GM18951 (cell line): ENCODE measurements at regions of chr5 and their contacts with region 1.

Region 1: DNA sequence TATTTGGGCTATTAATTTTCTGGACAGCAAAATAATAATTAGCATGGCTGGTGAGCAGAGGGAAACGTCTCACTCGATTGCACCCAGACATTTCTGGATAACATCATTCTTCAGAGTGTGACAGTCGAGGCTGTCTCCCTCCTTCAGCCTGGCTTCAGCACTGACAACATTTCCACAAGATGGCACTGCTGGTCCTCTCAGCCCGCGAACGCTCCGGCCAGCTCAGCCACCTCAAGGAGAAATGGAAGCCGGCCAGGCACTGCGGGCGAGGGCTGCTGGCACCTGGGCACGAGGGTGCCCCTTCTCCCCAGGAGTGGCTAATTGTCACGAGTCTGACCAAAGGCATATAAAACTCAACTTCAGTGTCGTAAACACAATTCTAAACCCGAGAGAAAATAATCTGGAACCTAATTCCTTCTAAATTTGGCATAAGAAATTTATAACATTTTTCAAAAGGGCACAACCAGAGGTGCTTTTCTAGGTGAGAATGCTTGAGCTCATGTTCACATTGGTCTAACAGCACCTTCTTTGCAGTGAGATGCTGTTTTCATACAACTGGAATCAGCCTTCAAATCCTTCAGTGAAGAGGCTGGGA is 65.9 kb downstream of the DAP start:
- POLR2A ChIP-seq: no peak

Region 2: DNA sequence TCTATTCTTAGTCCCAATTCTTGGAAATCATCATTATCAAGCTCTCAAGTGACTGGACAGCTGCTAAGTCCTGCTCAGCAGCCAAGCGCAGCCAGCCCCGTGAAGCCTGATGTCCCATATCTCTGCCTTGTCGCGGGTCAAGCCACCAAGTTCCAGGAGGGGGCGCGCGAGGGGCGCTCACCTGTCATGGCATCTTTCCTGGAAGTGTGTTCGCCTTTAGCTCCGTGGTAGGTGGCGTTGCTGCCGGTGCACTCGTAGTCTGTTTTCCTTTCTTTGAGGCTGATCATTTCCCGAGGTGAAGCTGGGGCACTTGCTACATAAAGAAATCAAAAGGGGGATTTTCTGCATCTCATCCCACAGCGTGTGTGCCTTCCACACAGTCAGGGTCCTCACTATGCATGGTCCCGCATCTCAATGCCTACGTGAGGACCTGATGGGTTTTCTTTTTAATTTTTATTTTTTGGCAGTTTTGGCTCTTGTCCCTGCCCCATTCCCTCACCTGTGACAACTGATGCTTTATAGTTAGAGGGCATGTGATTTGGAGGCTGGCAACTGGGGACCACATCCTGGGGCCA is 292.9 kb after region 1 on chr5:
- in situ Hi-C with region 1: loop called (anchors 25 kb)
- POLR2A ChIP-seq: no peak

Region 3: GRCh38 chr5:11182441-11183268 is 487.5 kb after region 1 on chr5:
- in situ Hi-C with region 1: loop called (anchors 25 kb)
- POLR2A ChIP-seq: no peak